ENCODE measurements at regions of chr3 and their contacts with region 1.

Region 1: GRCh38 chr3:53709860-53710674 is 136.2 kb downstream of the CHDH start:
- DNase-seq: peak; percentile 21
- H3K4me3 ChIP-seq: no peak overlapping the region
- H3K27ac ChIP-seq: no peak overlapping the region
- H3K27me3 ChIP-seq: peaks cover 8% of the 10 kb centered on the region
- CTCF ChIP-seq: peak; percentile 79

Region 2: GRCh38 chr3:53303957-53304356 is 406.1 kb before region 1 on chr3:
- CTCF ChIA-PET with region 1: interaction called, 31 read pairs
- POLR2A ChIA-PET with region 1: no interaction called
- DNase-seq: no peak
- H3K4me3 ChIP-seq: no peak overlapping the region
- H3K27ac ChIP-seq: no peak overlapping the region
- H3K27me3 ChIP-seq: no peaks in the 10 kb centered on the region
- CTCF ChIP-seq: no peak

Region 3: DNA sequence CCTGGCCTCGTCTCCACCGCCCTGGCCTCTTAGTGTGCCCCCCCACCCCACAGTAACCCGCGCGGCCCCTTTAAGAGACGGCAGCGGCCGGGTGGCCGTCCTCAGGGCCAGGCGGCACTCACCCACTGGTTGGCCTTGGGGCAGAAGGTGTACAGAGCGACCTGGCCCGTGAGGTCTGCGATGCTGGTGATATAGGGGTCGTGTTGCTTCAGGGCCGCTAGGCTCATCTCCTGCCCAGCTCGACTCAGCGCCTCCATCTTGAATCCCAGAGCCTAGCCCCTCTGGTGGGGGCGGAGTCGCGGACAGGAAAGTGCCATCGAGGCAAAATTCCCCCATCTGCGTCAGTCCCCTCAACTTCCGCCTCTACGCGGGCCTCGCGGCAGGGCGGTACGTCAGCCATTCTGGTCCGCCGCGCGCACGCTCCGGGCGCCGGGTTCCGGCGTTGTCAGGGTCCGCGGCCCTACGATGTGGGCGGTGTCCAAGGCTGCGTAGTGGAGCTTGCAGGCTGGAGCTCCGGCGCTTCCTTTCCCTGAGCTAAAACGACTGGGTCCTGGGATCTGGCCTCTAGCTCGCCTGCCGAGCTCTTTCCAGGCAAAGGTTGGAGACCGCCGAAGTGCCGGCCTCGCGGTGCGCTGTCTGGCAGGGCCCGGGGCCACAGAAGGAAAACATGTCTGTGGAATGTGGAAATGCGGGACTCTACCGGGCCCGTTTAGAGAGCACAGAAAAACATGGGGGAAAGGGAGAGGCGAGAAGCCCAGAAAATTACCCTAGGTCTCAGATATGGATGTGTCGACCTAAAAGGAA is 362.6 kb before region 1 on chr3 and contains the start of gene DCP1A:
- CTCF ChIA-PET with region 1: interaction called, 11 read pairs
- POLR2A ChIA-PET with region 1: no interaction called
- DNase-seq: peak; percentile 92
- H3K4me3 ChIP-seq: peak within 1 kb of the TSS; percentile 99
- H3K27ac ChIP-seq: peak within 1 kb of the TSS; percentile 95
- H3K27me3 ChIP-seq: no peaks in the 10 kb centered on the region
- CTCF ChIP-seq: no peak
- polyA plus RNA-seq, gene DCP1A: 23.5 and 27.0 TPM in 2 replicates

Region 4: DNA sequence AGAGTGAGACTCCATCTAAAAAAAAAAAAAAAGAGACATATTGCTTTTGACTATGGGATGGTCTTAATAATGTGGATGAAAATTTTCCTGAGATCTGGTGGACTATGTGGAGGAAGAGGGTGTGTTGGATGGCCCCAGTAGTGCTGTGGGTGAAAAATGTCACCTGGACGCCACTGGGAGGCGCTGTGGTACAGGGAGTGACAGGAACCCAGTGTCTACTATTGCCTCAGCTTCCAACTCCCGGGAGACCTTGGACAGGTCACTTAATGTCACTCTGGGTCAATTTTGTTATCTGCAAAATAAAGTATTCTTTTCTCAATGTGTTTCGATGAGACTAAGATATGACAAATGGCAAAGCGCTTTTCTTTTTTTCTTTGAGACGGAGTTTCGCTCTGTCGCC is 335.0 kb before region 1 on chr3:
- CTCF ChIA-PET with region 1: interaction called, 12 read pairs
- POLR2A ChIA-PET with region 1: no interaction called
- DNase-seq: no peak
- H3K4me3 ChIP-seq: no peak overlapping the region
- H3K27ac ChIP-seq: no peak overlapping the region
- H3K27me3 ChIP-seq: no peaks in the 10 kb centered on the region
- CTCF ChIP-seq: peak; percentile 62

Region 5: DNA sequence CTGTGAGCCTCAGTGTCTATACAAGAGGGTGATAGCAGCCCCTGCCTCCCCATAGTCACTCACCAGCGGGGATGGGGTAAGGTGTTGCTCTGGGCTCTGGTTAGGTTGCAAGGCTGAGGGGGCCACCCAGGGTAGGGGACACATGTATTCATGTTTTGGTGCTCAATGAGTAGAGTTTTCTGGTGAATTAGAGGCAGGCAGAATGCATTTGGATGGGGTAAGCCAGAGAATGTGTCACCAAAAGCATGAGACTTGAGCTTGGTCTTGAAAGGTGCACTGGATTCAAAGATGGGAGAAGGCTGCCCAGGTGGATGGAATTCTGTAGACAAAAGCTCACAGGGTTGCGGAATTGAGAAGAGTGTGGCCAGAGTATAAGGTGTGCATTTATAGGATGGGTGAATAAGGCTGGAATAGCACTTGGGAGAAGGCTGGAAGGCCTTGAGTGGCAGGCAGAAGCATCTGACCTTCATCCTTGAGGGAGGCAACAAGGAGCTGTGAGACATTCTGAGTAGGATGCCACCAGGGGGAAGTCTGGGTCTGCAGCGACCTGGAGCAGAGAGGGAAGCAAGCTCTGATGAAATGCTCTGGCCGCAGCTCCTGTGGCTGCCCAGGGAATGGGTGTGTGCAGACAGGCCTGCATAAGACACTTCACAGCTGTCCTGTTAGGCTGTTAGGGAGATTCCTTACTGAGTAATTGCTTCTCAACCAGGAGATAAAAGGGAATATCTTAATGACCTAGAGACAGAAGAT is 13.5 kb before region 1 on chr3:
- CTCF ChIA-PET with region 1: interaction called, 27 read pairs
- POLR2A ChIA-PET with region 1: no interaction called
- DNase-seq: no peak
- H3K4me3 ChIP-seq: no peak overlapping the region
- H3K27ac ChIP-seq: no peak overlapping the region
- H3K27me3 ChIP-seq: peaks cover 7% of the 10 kb centered on the region
- CTCF ChIP-seq: no peak

Region 6: GRCh38 chr3:53721187-53722119 is 11.4 kb after region 1 on chr3:
- CTCF ChIA-PET with region 1: interaction called, 11 read pairs
- POLR2A ChIA-PET with region 1: no interaction called
- DNase-seq: no peak
- H3K4me3 ChIP-seq: no peak overlapping the region
- H3K27ac ChIP-seq: no peak overlapping the region
- H3K27me3 ChIP-seq: no peaks in the 10 kb centered on the region
- CTCF ChIP-seq: no peak

Region 7: DNA sequence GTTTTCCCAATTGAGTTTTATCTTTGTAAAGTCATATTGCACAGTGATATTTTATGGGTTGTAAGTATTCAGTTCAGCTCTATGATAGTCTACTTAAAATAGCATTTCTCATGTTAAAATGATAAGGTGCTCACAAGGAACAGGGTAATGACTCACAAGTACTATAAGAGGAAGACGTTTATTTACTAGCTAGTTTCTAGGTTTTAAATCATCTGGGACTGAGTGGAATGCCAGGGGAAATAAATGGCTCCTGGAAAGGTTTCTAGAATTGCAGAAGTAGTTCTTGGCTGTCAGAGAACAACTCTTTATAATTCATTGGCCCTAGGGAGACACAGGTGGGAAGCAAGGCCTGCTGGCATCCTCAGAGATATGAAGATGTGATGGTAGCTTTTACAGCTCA is 23.4 kb after region 1 on chr3:
- CTCF ChIA-PET with region 1: no interaction called
- POLR2A ChIA-PET with region 1: no interaction called
- DNase-seq: no peak
- H3K4me3 ChIP-seq: no peak overlapping the region
- H3K27ac ChIP-seq: no peak overlapping the region
- H3K27me3 ChIP-seq: no peaks in the 10 kb centered on the region
- CTCF ChIP-seq: no peak

Measured in AG04450 (cell line).